ENCODE measurements at regions of chr3 and their contacts with region 1.

Region 1: DNA sequence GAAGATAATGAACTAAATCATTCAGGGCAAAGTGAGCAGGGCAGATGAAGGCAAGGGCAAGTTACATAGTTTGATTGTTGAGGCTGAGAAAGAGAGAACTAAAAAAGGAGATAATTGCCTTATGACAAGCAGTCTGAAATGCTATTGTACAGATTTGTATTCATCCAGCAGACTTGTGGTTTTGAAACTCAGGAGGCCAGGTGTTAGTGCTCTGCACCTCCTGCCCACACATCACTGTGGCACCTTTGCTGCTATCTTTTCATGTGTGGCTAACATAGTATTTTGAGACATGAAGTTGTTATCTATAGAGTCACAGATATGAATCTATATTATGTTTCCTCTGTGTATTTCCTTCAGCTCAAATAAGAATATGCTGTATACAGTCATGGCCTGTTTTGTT is 24.3 kb upstream of the SUCLG2 start:
- DNase-seq: no peak
- ATAC-seq: no peak
- H3K4me3 ChIP-seq: no peak overlapping the region
- H3K27ac ChIP-seq: no peak overlapping the region
- H3K4me1 ChIP-seq: no peaks in the 10 kb centered on the region
- H3K27me3 ChIP-seq: no peaks in the 10 kb centered on the region
- CTCF ChIP-seq: no peak

Region 2: GRCh38 chr3:67578416-67578815 is 100.2 kb before region 1 on chr3:
- CTCF ChIA-PET with region 1: no interaction called
- POLR2A ChIA-PET with region 1: no interaction called
- in situ Hi-C with region 1: no loop called
- intact Hi-C with region 1: no loop called
- DNase-seq: no peak
- ATAC-seq: no peak
- H3K4me3 ChIP-seq: no peak overlapping the region
- H3K27ac ChIP-seq: no peak overlapping the region
- H3K4me1 ChIP-seq: no peaks in the 10 kb centered on the region
- H3K27me3 ChIP-seq: no peaks in the 10 kb centered on the region
- CTCF ChIP-seq: no peak

Region 3: GRCh38 chr3:67647390-67647878 is 31.2 kb before region 1 on chr3:
- CTCF ChIA-PET with region 1: no interaction called
- POLR2A ChIA-PET with region 1: no interaction called
- in situ Hi-C with region 1: no loop called
- intact Hi-C with region 1: no loop called
- DNase-seq: peak; percentile 92
- ATAC-seq: peak; percentile 93
- H3K4me3 ChIP-seq: 0 out of 4 replicates have a peak overlapping the region, but pooled peaks of 1 of the 2 experiments have one; percentile 1
- H3K27ac ChIP-seq: peak overlapping the region; percentile 91
- H3K4me1 ChIP-seq: peaks cover 32% of the 10 kb centered on the region
- H3K27me3 ChIP-seq: no peaks in the 10 kb centered on the region
- CTCF ChIP-seq: no peak

Region 4: GRCh38 chr3:67689806-67690205 is 11.1 kb after region 1 on chr3:
- CTCF ChIA-PET with region 1: no interaction called
- POLR2A ChIA-PET with region 1: interaction called, 16 read pairs
- in situ Hi-C with region 1: no loop called
- intact Hi-C with region 1: no loop called
- DNase-seq: no peak
- ATAC-seq: no peak
- H3K4me3 ChIP-seq: no peak overlapping the region
- H3K27ac ChIP-seq: no peak overlapping the region
- H3K4me1 ChIP-seq: no peaks in the 10 kb centered on the region
- H3K27me3 ChIP-seq: no peaks in the 10 kb centered on the region
- CTCF ChIP-seq: no peak

Measured in Panc1 (cell line).